PC-9 (cell line): ENCODE measurements at regions of chr7 and their contacts with region 1.

Region 1: DNA sequence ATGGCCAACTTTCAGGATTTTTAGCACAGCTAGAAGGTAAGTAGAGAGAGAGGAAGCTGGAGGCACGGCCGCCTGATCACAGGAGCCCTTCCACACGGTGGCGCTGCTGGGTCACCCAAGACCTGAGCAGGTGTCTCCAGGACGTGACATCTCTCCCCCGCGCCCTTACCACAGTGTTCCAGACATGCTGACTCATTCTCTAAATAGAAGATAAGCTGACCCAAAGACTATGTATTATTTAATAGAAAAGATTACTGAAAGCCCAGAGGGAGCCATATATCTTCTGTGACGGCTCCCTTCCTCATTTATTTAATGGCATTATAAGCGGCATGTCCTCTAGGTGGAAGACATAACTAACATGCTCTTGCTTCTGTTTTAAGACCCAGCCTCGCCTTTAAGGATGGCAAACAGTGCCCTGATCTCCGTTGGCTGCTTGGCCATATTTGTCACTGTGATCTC is 26.0 kb upstream of the MALSU1 start:
- DNase-seq: peak; percentile 98 to 99
- H3K4me3 ChIP-seq: peak overlapping the region; percentile 42
- H3K27ac ChIP-seq: peak overlapping the region; percentile 60
- H3K4me1 ChIP-seq: peaks cover 19% of the 10 kb centered on the region
- H3K27me3 ChIP-seq: no peaks in the 10 kb centered on the region
- CTCF ChIP-seq: peak; percentile 98

Region 2: DNA sequence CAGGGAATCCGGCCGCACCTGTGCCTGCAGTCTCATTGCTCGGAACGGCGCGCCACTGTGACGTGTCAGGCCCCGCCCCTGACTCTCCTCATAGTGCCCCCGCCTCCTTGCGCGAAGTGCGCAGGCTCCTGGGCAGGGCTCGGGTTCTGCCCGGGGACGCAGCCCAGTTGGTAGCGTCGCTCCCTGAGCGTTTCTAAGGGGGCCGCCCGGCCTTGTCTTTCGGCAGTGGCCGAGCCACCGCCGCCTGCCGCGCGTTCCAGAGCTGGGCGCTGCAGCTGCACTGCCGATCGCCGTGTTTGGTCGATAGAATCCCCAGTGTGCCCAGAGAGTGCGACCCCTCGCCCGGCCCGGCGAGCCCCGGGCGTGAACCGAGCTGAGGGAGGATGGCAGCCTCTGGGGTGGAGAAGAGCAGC is 167.5 kb before region 1 on chr7 and contains the start of gene KLHL7:
- CTCF ChIA-PET with region 1: interaction called, 13 read pairs
- POLR2A ChIA-PET with region 1: no interaction called
- intact Hi-C with region 1: no loop called
- DNase-seq: peak; percentile 94 to 98
- H3K4me3 ChIP-seq: peak within 1 kb of the TSS; percentile 80
- H3K27ac ChIP-seq: peak within 1 kb of the TSS; percentile 80
- H3K4me1 ChIP-seq: peaks cover 20% of the 10 kb centered on the region
- H3K27me3 ChIP-seq: no peaks in the 10 kb centered on the region
- CTCF ChIP-seq: no peak
- total RNA-seq, gene KLHL7: 46.3 and 61.0 TPM in 2 replicates

Region 3: GRCh38 chr7:23161482-23161881 is 111.7 kb before region 1 on chr7:
- CTCF ChIA-PET with region 1: no interaction called
- POLR2A ChIA-PET with region 1: no interaction called
- intact Hi-C with region 1: no loop called
- DNase-seq: no peak
- H3K4me3 ChIP-seq: no peak overlapping the region
- H3K27ac ChIP-seq: no peak overlapping the region
- H3K4me1 ChIP-seq: no peaks in the 10 kb centered on the region
- H3K27me3 ChIP-seq: no peaks in the 10 kb centered on the region
- CTCF ChIP-seq: no peak

Region 4: GRCh38 chr7:23287612-23288011 is 14.4 kb after region 1 on chr7:
- CTCF ChIA-PET with region 1: no interaction called
- POLR2A ChIA-PET with region 1: no interaction called
- intact Hi-C with region 1: no loop called
- DNase-seq: no peak
- H3K4me3 ChIP-seq: no peak overlapping the region
- H3K27ac ChIP-seq: no peak overlapping the region
- H3K4me1 ChIP-seq: no peaks in the 10 kb centered on the region
- H3K27me3 ChIP-seq: no peaks in the 10 kb centered on the region
- CTCF ChIP-seq: no peak

Region 5: GRCh38 chr7:23298885-23299769 is 26.0 kb after region 1 on chr7 and contains the start of gene MALSU1:
- CTCF ChIA-PET with region 1: interaction called, 19 read pairs
- POLR2A ChIA-PET with region 1: no interaction called
- intact Hi-C with region 1: loop called (anchors 1 kb)
- DNase-seq: peak; percentile 95 to 97
- H3K4me3 ChIP-seq: peak within 1 kb of the TSS; percentile 71
- H3K27ac ChIP-seq: peak within 1 kb of the TSS; percentile 85
- H3K4me1 ChIP-seq: peaks cover 27% of the 10 kb centered on the region
- H3K27me3 ChIP-seq: no peaks in the 10 kb centered on the region
- CTCF ChIP-seq: no peak
- total RNA-seq, gene MALSU1: 105 and 133 TPM in 2 replicates

Region 6: DNA sequence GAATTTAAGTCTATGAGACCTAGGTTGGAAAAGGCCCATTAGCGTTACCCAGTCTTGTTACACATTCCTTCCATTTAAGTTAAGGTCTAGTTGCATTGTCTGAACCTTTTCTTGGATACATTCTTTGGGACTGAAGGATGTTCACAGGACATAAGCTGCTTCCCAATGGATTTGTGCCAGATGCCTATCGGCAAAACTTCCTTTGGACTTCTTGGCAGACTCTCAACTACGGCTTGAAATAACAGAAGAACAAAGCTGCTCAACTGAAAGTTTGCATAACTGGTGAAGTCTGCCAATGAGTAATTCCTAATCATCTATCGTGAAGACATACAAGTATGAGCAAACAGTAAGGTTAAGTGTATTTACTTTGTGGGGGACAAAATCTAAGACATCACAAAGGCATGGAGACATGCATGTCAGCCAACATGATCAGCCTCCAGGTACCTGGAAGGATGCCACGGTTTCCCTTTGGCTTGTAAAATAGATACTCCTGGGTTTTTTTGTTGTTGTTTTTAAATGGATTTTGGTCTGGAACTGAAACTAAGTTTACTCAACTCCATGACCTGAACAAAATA is 61.4 kb after region 1 on chr7:
- CTCF ChIA-PET with region 1: no interaction called
- POLR2A ChIA-PET with region 1: no interaction called
- intact Hi-C with region 1: loop called (anchors 1 kb)
- DNase-seq: peak; percentile 80 to 100
- H3K4me3 ChIP-seq: no peak overlapping the region
- H3K27ac ChIP-seq: peak overlapping the region; percentile 60
- H3K4me1 ChIP-seq: peaks cover 52% of the 10 kb centered on the region
- H3K27me3 ChIP-seq: no peaks in the 10 kb centered on the region
- CTCF ChIP-seq: no peak

Region 7: GRCh38 chr7:23431702-23432199 is 158.6 kb after region 1 on chr7:
- CTCF ChIA-PET with region 1: interaction called, 5 read pairs
- POLR2A ChIA-PET with region 1: no interaction called
- intact Hi-C with region 1: loop called (anchors 1 kb)
- DNase-seq: no peak
- H3K4me3 ChIP-seq: no peak overlapping the region
- H3K27ac ChIP-seq: peak overlapping the region; percentile 71
- H3K4me1 ChIP-seq: peaks cover 29% of the 10 kb centered on the region
- H3K27me3 ChIP-seq: no peaks in the 10 kb centered on the region
- CTCF ChIP-seq: no peak